ENCODE measurements at regions of chr14 and their contacts with region 1.

Region 1: DNA sequence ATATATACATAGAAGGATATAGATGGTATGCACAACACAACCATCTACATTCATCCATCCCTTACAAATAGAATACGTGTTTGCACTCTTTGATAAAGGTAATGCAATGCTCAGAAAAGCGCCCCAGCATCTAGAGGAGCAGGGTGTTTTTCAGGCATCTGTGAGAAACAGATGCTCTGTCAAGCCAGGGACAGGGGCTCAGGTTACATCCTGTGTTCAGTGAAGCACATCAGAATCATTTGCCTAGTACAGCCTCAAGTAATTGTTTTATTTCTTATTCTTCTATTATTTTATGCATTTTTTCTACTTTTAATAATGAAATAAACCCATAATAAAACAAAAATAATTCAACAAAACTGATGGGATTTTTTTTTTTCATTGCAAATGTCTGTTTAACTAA is 50.5 kb upstream of the HIF1A start:
- DNase-seq: no peak
- H3K4me3 ChIP-seq: no peak overlapping the region
- H3K4me3 Mint-ChIP-seq: no peak overlapping the region
- H3K27ac ChIP-seq: no peak overlapping the region
- H3K27ac Mint-ChIP-seq: no peak overlapping the region
- H3K4me1 ChIP-seq: peaks cover 17% of the 10 kb centered on the region
- H3K4me1 Mint-ChIP-seq: peaks cover 18 to 23% (median 22%) of the 10 kb centered on the region in 4 donors
- H3K27me3 ChIP-seq: no peaks in the 10 kb centered on the region
- H3K27me3 Mint-ChIP-seq: no peaks in the 10 kb centered on the region

Region 2: DNA sequence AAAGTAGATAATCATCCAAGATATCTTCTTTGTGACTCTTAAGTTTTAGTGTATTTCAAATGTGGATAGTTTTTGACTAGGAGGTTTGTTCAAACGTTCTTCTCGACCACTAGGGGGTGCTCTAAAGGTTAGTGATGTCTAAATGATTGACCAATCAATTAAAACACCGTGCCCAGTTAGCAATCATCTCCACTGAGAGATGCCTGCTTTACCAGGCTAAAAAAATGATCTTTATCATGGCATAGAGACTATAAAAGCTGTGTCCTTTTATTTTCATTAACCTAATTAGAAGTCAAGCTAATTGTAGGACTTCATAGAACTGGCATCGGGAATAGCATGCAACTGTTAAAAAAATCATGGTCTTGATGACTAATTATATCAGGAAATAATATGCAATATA is 169.5 kb before region 1 on chr14:
- CTCF ChIA-PET with region 1: no interaction called
- POLR2A ChIA-PET with region 1: no interaction called
- intact Hi-C with region 1: no loop called
- DNase-seq: peak in 3 of 5 donors; percentile 38 to 52 (median 40)
- H3K4me3 ChIP-seq: no peak overlapping the region
- H3K4me3 Mint-ChIP-seq: peak overlapping the region in 6 of 8 donors; percentile 25 to 81 (median 48)
- H3K27ac ChIP-seq: peak overlapping the region; percentile 87
- H3K27ac Mint-ChIP-seq: peak overlapping the region; percentile 87 to 100 (median 93)
- H3K4me1 ChIP-seq: peaks cover 98% of the 10 kb centered on the region
- H3K4me1 Mint-ChIP-seq: peaks cover 76 to 97% (median 92%) of the 10 kb centered on the region in 4 donors
- H3K27me3 ChIP-seq: no peaks in the 10 kb centered on the region
- H3K27me3 Mint-ChIP-seq: no peaks in the 10 kb centered on the region

Region 3: DNA sequence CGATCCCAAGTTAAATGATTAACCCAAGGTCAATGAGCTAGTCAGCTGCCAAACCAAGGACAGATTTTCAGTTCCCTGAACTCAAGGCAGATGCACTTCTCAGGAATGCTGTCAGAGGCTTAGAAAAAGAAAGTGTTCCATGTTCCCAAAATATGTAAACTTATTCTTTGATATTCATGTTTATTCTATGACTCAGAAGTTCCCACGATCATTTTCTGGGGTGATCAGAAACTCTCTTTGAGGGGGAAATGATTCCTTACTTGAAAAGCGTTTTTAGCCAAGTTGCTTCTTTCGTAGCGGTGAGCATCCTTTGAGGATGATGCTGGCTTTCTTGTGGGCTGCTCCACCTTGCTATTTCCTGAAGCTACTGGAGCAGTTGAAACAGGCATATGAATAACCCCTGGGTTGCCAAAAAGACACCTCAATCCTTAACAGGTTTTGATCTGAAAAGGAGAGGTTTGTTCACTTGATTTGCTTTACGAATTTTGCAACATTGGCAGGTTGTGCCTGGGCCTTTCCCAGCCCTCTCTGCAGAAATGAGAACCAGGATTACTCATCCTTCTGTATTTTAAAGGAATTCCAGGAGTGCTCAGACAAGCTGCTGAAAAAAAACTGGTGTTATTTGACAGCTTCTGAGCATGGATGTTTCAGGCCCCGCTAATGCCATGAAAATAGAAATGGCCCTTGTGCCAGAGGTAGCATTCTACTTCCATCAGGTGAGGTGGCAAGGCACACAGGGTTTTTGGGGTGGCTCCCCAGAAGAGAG is 70.9 kb before region 1 on chr14:
- CTCF ChIA-PET with region 1: no interaction called
- POLR2A ChIA-PET with region 1: no interaction called
- intact Hi-C with region 1: no loop called
- DNase-seq: no peak
- H3K4me3 ChIP-seq: no peak overlapping the region
- H3K4me3 Mint-ChIP-seq: peak overlapping the region in 1 of 8 donors; percentile 27
- H3K27ac ChIP-seq: no peak overlapping the region
- H3K27ac Mint-ChIP-seq: peak overlapping the region in 1 of 7 donors; percentile 36
- H3K4me1 ChIP-seq: peaks cover 34% of the 10 kb centered on the region
- H3K4me1 Mint-ChIP-seq: peaks cover 26 to 49% (median 36%) of the 10 kb centered on the region in 4 donors
- H3K27me3 ChIP-seq: no peaks in the 10 kb centered on the region
- H3K27me3 Mint-ChIP-seq: peaks cover 0 to 2% of the 10 kb centered on the region in 2 donors

Region 4: DNA sequence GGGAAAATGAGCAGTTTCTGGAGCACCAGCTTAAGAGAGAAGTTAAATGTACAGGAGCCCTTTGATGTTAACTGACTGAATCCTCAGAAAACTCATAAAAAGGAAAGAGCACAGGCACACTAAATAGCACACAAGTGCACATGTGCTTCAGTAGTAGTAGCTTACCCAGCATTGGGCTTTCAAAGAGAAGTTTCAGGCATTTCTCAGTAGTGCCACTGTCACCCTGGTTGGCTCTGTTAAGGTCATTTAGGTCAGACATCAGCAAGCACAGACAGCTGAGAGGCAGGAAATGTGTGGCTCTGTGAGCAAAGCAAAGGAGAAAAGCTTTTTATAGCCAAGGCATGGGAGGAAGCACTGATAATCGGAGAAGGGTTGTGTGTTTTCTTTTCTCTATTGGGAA is 45.9 kb before region 1 on chr14:
- CTCF ChIA-PET with region 1: no interaction called
- POLR2A ChIA-PET with region 1: no interaction called
- intact Hi-C with region 1: loop called (anchors 5 kb)
- DNase-seq: no peak
- H3K4me3 ChIP-seq: no peak overlapping the region
- H3K4me3 Mint-ChIP-seq: no peak overlapping the region
- H3K27ac ChIP-seq: no peak overlapping the region
- H3K27ac Mint-ChIP-seq: peak overlapping the region in 4 of 7 donors; percentile 17 to 78 (median 41)
- H3K4me1 ChIP-seq: peaks cover 19% of the 10 kb centered on the region
- H3K4me1 Mint-ChIP-seq: peaks cover 22 to 36% (median 29%) of the 10 kb centered on the region in 4 donors
- H3K27me3 ChIP-seq: no peaks in the 10 kb centered on the region
- H3K27me3 Mint-ChIP-seq: no peaks in the 10 kb centered on the region

Region 5: GRCh38 chr14:61678975-61679374 is 34.1 kb after region 1 on chr14:
- CTCF ChIA-PET with region 1: no interaction called
- POLR2A ChIA-PET with region 1: no interaction called
- intact Hi-C with region 1: loop called (anchors 5 kb)
- DNase-seq: no peak
- H3K4me3 ChIP-seq: no peak overlapping the region
- H3K4me3 Mint-ChIP-seq: no peak overlapping the region
- H3K27ac ChIP-seq: no peak overlapping the region
- H3K27ac Mint-ChIP-seq: no peak overlapping the region
- H3K4me1 ChIP-seq: no peaks in the 10 kb centered on the region
- H3K4me1 Mint-ChIP-seq: peaks cover 0 to 5% (median 0%) of the 10 kb centered on the region in 4 donors
- H3K27me3 ChIP-seq: no peaks in the 10 kb centered on the region
- H3K27me3 Mint-ChIP-seq: no peaks in the 10 kb centered on the region